ENCODE measurements at regions of chr9 and their contacts with region 1.

Region 1: DNA sequence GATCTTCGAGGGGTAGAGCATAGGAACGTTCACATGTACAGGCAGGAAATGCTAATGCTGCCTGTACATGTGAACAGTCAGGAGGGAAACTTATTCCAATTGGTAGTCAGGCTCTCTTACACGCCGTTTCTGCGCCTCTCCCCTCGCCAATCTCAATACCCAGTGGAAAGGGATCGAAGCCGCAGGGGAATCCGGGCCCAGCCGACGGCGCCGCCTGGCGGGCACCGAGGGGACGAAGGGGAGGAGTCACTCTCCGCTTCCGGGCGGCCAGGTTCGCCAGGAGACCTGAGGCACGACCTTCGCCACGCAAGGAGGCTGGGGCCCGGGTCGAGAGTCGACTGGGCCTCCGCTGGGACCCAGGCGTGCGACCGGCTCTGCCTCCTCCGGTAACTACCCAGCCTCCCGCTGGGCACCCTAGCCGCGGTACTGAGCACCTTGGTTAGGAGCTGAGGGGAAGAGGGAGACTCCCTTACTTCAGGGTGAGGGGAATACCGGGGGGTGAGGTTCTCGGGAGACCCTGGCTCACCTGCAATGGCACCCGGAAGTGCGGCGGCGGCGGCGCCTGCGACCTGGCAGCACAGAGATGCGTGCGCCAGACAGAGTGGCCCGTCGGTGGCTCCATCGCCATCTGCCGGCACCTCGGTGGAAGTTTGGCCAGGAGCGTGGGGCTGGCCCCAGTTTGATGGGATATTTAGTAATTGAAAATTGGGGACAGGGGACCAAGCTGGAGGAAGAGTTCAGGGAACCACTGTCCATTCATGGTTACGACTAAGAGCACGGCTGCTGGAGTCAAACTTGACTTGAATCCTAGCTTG is at the start of gene PIGO:
- DNase-seq: peak; percentile 85
- H3K4me3 Mint-ChIP-seq: peak within 1 kb of the TSS; percentile 85
- H3K27ac Mint-ChIP-seq: peak within 1 kb of the TSS; percentile 95
- H3K4me1 Mint-ChIP-seq: peaks cover 15% of the 10 kb centered on the region
- H3K27me3 Mint-ChIP-seq: no peaks in the 10 kb centered on the region
- CTCF ChIP-seq: peak; percentile 49
- total RNA-seq, gene PIGO: 34.8 and 39.2 TPM in 2 replicates

Region 2: DNA sequence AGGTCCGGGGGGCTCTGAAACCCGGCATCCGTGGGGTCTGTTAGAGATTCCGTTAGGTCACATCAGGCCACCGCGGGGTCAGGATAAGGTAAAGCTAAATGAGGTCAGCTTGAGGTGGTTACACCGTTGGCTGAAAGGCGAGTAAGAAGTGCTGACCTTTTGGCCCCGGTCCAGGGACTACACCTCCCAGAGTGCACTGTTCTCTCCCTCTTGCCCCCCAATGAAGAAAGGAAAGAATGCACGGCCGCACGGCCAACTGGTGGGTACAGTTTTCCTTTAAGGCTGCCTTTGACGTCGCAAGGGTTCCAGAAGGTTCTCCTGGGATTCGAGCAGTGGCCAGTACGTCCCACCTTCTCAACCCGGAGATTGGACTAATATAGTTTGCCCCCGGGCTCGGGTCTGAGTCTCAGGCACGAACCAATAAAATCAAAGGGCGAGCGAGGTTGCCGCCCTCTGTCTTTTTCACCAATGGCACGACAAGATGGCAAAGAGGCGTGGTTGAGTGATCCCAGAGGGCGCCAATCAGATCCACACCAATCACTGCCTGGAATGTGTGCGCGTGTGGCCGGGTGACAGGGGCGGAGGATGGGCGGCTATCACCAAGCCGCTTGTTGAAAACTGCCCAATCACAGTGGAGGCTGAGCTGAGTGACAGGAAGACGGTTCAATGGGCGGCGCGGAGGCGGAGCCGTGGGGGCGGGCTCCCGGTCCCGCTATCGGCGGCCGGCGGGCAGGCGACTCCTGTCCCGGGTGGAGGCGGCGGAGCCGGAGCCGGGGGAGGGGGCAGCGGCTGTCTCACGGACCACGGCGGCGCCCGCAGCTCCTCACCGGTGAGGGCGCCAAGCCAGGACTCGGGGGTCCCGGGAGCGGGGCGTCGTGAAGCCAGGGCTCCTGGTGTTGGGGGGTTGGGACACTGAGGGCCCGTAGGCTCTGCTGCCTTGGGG is 107.0 kb before region 1 on chr9 and contains the start of gene DNAJB5:
- CTCF ChIA-PET with region 1: interaction called, 3 read pairs
- POLR2A ChIA-PET with region 1: no interaction called
- intact Hi-C with region 1: loop called (anchors 1 kb)
- DNase-seq: peak; percentile 99
- H3K4me3 Mint-ChIP-seq: peak within 1 kb of the TSS; percentile 78
- H3K27ac Mint-ChIP-seq: peak within 1 kb of the TSS; percentile 46
- H3K4me1 Mint-ChIP-seq: peaks cover 32% of the 10 kb centered on the region
- H3K27me3 Mint-ChIP-seq: no peaks in the 10 kb centered on the region
- CTCF ChIP-seq: no peak
- total RNA-seq, gene DNAJB5: 2.2 and 2.9 TPM in 2 replicates

Region 3: GRCh38 chr9:35111001-35111933 is 15.0 kb after region 1 on chr9:
- CTCF ChIA-PET with region 1: interaction called, 23 read pairs
- POLR2A ChIA-PET with region 1: interaction called, 97 read pairs
- intact Hi-C with region 1: loop called (anchors 2 kb)
- DNase-seq: peak; percentile 98
- H3K4me3 Mint-ChIP-seq: peak overlapping the region; percentile 87
- H3K27ac Mint-ChIP-seq: peak overlapping the region; percentile 96
- H3K4me1 Mint-ChIP-seq: peaks cover 50% of the 10 kb centered on the region
- H3K27me3 Mint-ChIP-seq: no peaks in the 10 kb centered on the region
- CTCF ChIP-seq: no peak

Region 4: GRCh38 chr9:35152936-35153335 is 56.7 kb after region 1 on chr9:
- CTCF ChIA-PET with region 1: no interaction called
- POLR2A ChIA-PET with region 1: no interaction called
- intact Hi-C with region 1: no loop called
- DNase-seq: no peak
- H3K4me3 Mint-ChIP-seq: no peak overlapping the region
- H3K27ac Mint-ChIP-seq: no peak overlapping the region
- H3K4me1 Mint-ChIP-seq: no peaks in the 10 kb centered on the region
- H3K27me3 Mint-ChIP-seq: no peaks in the 10 kb centered on the region
- CTCF ChIP-seq: no peak

Measured in MCF 10A (cell line).